Vagina (tissue), 2 donors: ENCODE measurements at regions of chr2 and their contacts with region 1.

Region 1: GRCh38 chr2:11743846-11744553 is 2.4 kb upstream of the LPIN1 start:
- DNase-seq: peak in 1 of 2 donors; percentile 99
- H3K4me3 ChIP-seq: peak overlapping the region in 1 of 2 donors; percentile 38
- H3K27ac ChIP-seq: peak overlapping the region; percentile 72
- H3K4me1 ChIP-seq: peaks cover 43% of the 10 kb centered on the region
- H3K27me3 ChIP-seq: no peaks in the 10 kb centered on the region
- CTCF ChIP-seq: no peak
- POLR2A ChIP-seq: no peak

Region 2: GRCh38 chr2:11784747-11785610 is 41.0 kb after region 1 on chr2:
- intact Hi-C with region 1: loop called (anchors 5 kb)
- DNase-seq: peak in 1 of 2 donors; percentile 82
- H3K4me3 ChIP-seq: peak overlapping the region in 1 of 2 donors; percentile 31
- H3K27ac ChIP-seq: no peak overlapping the region
- H3K4me1 ChIP-seq: no peaks in the 10 kb centered on the region
- H3K27me3 ChIP-seq: no peaks in the 10 kb centered on the region
- CTCF ChIP-seq: peak; percentile 57 to 81 (median 74)
- POLR2A ChIP-seq: no peak